Aorta (tissue), 5 donors: ENCODE measurements at regions of chr19 and their contacts with region 1.

Region 1: GRCh38 chr19:14405758-14406644 is 13.1 kb downstream of the DDX39A start:
- DNase-seq: peak; percentile 90 to 96
- ATAC-seq: peak; percentile 92
- H3K4me3 ChIP-seq: no peak overlapping the region
- H3K27ac ChIP-seq: peak overlapping the region in 1 of 2 donors; percentile 42
- H3K4me1 ChIP-seq: no peaks in the 10 kb centered on the region
- H3K27me3 ChIP-seq: no peaks in the 10 kb centered on the region

Region 2: DNA sequence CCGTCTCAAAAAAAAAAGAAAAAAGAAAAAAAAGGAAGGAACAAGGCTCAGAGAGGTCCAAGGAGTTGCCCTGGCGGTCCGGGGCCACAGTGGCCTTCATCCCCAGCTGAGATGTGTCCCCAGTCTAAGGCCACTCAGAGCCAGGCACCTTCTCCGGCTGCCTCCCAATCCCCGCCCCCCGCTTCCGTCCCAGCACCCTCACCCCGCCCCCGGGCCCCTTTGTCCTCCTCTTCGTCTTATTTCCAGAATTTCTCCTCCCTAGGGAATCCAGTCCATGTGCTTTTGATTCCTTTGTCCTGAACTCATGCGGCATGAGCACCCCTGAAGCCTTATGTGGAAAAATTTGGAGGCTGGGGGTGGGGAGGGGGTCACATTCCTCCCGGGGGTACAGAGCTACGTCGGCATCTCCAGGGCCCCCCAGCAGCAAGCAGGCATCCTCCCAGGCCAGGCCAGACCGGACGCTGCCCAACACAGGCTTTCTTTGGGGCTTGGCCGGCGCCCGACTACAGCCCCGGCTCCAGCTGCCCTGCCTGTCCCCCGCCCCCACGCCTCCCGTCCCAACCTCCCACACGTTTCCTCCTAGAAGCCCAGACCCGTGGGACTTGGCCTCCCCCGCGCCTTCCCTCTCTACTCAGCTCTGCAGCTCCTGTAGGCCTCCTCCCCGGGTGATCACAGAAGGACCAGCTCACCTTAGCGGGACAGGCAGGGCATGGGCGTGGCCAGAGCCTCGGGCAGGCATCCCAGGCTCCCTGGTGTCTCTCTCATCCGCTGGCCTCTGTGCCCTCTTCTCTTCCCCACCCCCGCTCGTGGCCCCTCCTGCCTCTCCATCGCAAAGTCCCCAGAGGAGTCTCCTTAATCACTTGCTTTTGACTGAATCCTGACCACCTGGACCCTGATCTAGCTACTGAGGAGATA is 42.6 kb before region 1 on chr19:
- intact Hi-C with region 1: loop called in 1 of 2 experiments (anchors 1 kb)
- DNase-seq: peak; percentile 90 to 96
- ATAC-seq: peak; percentile 89
- H3K4me3 ChIP-seq: no peak overlapping the region
- H3K27ac ChIP-seq: peak overlapping the region; percentile 57 to 64
- H3K4me1 ChIP-seq: no peaks in the 10 kb centered on the region
- H3K27me3 ChIP-seq: no peaks in the 10 kb centered on the region

Region 3: DNA sequence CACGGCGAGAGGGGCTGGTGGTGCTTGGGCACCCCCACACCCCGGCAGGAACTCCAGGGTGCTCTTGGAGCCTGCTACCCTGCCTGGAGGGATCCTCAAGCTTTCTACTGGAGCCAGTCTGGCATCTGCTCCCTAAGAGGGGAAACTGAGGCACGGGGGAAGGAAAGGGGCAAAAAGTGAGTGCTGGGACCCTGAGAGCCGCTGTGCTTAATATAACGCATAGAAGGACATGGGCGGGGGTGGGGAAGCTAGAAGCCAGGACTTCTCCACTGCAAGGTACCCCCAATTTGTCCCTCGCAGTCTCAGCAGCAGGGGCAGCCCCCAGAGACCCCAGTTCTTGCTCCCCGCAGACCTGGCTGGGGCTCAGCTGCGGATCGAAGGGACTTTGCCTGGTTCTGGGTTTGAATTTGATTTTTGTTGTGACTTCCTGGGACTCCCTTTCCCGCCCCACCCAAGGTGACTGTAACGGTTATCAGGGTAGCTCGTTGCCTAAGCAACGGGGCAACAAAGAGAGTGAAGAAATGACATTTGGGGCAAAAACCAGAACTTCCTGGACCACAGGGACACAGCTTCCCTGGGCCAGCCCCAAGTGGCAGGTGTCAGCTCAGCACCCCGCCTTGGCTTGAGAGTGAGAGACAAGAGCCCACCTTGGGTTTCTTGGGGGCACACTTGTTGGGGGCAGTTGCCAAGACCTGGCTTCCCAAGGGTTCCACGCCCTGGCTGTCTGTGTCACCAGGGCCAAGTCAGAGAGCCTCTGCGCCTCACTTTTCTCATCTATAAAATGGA is 24.1 kb before region 1 on chr19:
- intact Hi-C with region 1: loop called in 1 of 2 experiments (anchors 1 kb)
- DNase-seq: peak in 1 of 2 donors; percentile 77
- ATAC-seq: peak; percentile 56
- H3K4me3 ChIP-seq: peak overlapping the region; percentile 88 to 91
- H3K27ac ChIP-seq: peak overlapping the region; percentile 44 to 91
- H3K4me1 ChIP-seq: no peaks in the 10 kb centered on the region
- H3K27me3 ChIP-seq: no peaks in the 10 kb centered on the region

Region 4: GRCh38 chr19:14395710-14396336 is 10.2 kb before region 1 on chr19:
- intact Hi-C with region 1: no loop called
- DNase-seq: no peak
- ATAC-seq: peak; percentile 39
- H3K4me3 ChIP-seq: no peak overlapping the region
- H3K27ac ChIP-seq: no peak overlapping the region
- H3K4me1 ChIP-seq: no peaks in the 10 kb centered on the region
- H3K27me3 ChIP-seq: no peaks in the 10 kb centered on the region

Region 5: DNA sequence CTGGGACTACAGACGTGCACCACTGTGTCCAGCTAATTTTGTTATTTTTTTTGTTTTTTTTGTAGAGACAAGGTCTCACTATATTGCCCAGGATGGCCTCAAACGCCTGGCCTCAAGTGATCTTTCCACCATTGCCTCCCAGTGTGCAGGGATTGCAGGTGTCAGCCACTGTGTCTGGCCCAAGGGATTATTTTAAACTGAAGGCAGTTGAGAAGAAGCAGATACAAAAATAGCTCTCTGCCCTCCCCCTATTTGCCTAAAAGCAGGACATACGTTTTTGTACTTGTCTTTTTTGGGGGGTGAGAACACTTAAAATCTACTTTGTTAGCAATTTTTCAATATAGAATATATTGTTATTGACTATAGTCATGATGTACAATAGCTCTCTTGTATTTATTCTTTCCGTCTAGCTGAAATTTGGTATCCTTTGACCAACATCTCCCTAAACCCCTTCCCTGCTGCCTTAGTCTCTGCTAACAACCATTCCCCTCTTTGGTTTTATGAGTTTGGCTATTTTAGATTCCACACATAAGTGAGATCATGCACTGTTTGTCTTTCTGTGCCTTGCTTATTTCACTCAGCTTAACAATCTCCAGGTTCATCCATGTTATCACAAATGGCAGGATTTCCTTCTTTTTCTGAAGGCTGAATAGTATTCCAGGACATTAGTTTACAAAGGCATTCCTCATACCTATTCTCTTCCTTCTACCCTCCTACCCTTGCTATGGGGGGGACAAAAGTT is 233.7 kb after region 1 on chr19:
- intact Hi-C with region 1: no loop called
- DNase-seq: no peak
- ATAC-seq: no peak
- H3K4me3 ChIP-seq: no peak overlapping the region
- H3K27ac ChIP-seq: no peak overlapping the region
- H3K4me1 ChIP-seq: no peaks in the 10 kb centered on the region
- H3K27me3 ChIP-seq: no peaks in the 10 kb centered on the region